ENCODE measurements at regions of chr1 and their contacts with region 1.

Region 1: DNA sequence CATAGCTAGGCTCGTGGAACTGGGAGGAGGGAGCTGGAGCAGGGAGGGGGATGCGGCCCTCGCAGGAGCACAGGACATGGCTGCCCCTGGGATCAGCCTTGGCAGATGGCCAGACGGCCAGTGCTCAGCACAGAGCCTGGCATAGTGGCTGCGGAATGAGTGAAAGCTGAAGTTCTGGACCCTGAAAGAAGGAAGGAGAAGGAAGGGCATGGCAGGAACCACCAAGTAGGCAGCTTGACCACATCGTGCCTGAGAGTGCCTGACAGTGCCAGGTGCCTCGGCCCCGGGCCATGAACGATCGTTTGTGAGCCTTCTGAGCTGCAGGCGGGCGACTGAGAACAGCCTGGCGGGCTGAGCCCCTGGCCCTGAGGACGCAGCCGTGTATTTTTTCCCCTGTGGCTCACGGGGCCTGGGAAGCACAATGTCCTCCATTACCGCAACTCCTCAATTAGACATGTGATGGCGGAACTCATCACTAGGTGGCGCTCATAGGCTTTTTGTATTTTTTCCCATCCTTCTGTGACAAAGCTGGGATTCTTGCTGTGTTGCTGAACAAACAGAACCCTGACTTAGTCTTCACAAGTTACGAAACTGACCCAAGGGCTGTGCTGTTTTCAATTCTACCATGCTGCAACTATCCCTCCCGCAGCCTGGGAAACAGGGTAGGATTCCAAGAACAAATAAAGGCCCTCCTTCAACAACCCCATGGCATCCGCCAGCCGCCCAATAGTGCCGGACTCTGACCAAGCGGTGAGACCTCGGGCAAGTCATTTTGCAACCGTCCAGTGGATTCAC is 29.9 kb upstream of the TMEM61 start:
- DNase-seq: peak; percentile 57
- H3K4me3 ChIP-seq: no peak overlapping the region
- H3K27me3 ChIP-seq: no peaks in the 10 kb centered on the region
- CTCF ChIP-seq: peak; percentile 75

Region 2: GRCh38 chr1:54934869-54935268 is 15.7 kb before region 1 on chr1:
- CTCF ChIA-PET with region 1: interaction called, 20 read pairs
- POLR2A ChIA-PET with region 1: no interaction called
- DNase-seq: peak; percentile 98
- H3K4me3 ChIP-seq: no peak overlapping the region
- H3K27me3 ChIP-seq: no peaks in the 10 kb centered on the region
- CTCF ChIP-seq: no peak

Region 3: GRCh38 chr1:54962612-54963395 is 12.2 kb after region 1 on chr1:
- CTCF ChIA-PET with region 1: interaction called, 15 read pairs
- POLR2A ChIA-PET with region 1: no interaction called
- DNase-seq: no peak
- H3K4me3 ChIP-seq: no peak overlapping the region
- H3K27me3 ChIP-seq: no peaks in the 10 kb centered on the region
- CTCF ChIP-seq: no peak

Region 4: DNA sequence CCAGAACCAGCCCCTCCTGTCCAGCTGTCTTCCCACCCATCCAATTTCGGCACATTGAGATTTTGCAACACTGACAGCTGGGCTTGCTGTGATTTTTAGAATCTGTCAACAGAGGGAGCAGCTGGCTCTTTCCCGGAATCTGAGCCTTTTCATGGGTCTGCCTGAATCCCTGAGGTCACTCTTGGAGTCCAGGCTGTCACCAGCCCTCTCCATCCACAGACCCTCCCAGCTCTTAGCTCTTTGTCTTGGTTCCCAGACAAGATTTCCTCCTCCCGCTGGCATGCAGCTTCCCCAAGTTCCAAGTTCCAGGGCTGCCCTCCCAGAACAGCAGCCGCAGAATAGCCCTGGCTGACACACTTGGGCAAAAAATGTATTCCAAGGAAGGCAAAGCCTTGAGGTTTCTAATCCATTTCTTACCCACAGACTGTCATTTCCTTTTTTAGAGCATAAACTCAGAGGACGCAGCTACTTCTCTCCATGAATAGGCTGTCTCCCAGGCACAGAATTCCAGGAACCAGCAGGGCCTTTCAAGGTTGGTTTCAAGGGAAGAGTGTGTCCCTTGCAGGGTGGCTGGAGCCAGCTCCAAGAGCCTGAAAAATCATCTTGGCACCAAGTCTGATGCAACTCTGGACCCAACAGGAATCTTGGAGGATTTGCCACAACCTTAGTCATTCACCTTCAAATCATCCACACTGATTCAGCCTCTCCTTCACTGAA is 22.8 kb after region 1 on chr1:
- CTCF ChIA-PET with region 1: interaction called, 18 read pairs
- POLR2A ChIA-PET with region 1: no interaction called
- DNase-seq: no peak
- H3K4me3 ChIP-seq: no peak overlapping the region
- H3K27me3 ChIP-seq: no peaks in the 10 kb centered on the region
- CTCF ChIP-seq: peak; percentile 62

Region 5: DNA sequence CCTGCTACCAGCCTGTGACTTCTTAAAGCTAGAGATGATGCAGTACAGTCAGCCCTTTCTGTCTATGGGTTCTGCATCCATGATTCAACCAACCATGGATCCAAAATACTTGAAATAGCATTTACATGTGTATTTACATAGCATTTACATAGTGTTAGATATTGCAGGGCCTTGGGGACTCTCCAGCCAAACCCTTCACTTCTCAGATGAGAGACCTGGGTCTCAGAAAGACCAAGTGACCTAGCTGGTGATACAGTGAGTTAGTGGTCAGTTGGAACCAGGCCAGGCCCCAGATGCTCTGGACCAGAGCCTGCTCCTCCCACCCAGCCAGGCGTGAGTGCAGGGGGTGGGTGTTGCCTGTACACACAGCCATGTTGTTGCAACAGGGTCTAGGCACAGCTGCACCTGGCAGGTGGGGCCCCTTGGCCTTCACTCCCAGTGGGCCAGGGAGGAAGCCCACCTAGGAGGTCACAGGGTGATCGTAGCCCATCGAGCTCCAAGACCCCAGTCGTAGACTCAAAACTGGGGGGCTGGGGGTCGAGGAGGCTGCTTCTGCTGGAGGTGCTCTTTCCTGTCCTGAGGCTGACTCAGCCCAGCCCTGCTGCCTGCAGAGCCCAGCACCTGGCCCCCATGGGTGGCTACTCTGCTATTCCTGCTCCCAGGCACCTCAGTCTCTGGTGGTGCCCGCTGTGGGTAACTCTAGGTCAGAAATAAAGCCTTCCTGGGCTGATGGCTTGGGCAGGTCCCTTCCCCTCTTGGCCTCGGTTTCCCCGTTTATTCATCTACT is 37.5 kb after region 1 on chr1:
- CTCF ChIA-PET with region 1: interaction called, 69 read pairs
- POLR2A ChIA-PET with region 1: no interaction called
- DNase-seq: no peak
- H3K4me3 ChIP-seq: no peak overlapping the region
- H3K27me3 ChIP-seq: peaks cover 8% of the 10 kb centered on the region
- CTCF ChIP-seq: no peak